ENCODE measurements at regions of chr4 and their contacts with region 1.

Region 1: DNA sequence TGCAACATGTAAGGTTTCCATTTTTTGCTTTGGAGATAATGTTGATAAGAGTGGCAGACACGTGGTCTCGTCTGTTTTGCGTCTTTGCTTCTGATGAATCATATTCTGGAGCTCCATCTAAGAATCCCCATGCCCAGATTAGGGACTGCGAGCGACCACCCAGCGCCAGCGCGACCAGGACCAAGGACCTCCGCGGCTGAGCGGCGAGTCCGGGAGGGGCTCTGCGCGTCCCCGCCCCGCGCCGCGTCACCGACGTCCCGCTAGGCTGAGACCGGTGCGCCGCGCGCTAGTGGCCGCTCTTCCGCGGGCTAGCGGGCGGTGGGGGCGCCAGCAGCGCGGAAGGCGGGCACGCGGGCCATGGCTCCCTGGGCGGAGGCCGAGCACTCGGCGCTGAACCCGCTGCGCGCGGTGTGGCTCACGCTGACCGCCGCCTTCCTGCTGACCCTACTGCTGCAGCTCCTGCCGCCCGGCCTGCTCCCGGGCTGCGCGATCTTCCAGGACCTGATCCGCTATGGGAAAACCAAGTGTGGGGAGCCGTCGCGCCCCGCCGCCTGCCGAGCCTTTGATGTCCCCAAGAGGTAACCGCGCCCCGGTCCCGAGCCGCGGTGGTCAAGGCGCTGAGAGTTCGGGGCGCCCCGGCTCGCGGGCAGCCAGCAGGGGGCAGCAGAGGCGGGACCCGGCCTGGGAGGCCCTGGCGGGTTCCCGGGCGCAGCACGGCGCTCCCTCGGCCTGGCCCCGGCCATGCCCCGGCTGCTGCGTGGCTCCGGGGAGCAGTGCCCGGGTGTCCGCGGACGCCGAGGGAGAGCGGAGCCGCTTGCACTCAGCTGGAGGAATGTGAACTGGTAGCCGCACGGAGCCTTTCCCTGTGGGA is at the start of gene SRD5A3:
- DNase-seq: peak; percentile 71
- H3K27ac ChIP-seq: peak within 1 kb of the TSS; percentile 94
- CTCF ChIP-seq: peak; percentile 94

Region 2: GRCh38 chr4:55259294-55259693 is 86.9 kb before region 1 on chr4:
- CTCF ChIA-PET with region 1: no interaction called
- POLR2A ChIA-PET with region 1: no interaction called
- DNase-seq: no peak
- H3K27ac ChIP-seq: no peak overlapping the region
- CTCF ChIP-seq: no peak

Region 3: DNA sequence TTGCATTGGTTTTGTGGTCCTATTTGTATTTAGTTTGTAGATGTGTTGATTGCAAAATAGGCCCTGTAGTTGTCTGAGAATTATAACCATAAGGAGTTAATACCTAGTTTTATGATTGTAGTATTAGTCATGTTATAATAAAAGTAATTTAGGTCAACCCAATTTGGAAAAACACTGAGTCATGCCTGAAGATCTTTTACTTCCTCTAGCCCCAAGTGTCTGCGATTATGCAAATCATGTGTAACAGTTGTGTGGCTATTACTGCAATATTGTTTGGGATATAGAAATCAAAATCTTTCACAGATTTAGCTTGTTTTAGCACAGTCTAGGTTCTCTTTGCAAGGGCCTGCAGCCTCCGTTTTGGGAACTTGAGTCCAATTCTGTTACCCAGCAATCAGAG is 12.5 kb after region 1 on chr4:
- CTCF ChIA-PET with region 1: interaction called, 10 read pairs
- POLR2A ChIA-PET with region 1: no interaction called
- DNase-seq: peak; percentile 88
- H3K27ac ChIP-seq: peak overlapping the region; percentile 68
- CTCF ChIP-seq: no peak

Region 4: GRCh38 chr4:55395529-55396307 is 49.5 kb after region 1 on chr4 and contains the start of gene TMEM165:
- CTCF ChIA-PET with region 1: interaction called, 21 read pairs
- POLR2A ChIA-PET with region 1: interaction called, 4 read pairs
- DNase-seq: peak; percentile 91
- H3K27ac ChIP-seq: peak within 1 kb of the TSS; percentile 92
- CTCF ChIP-seq: no peak

Measured in RWPE1 (cell line).